ENCODE measurements at regions of chr6 and their contacts with region 1.

Region 1: DNA sequence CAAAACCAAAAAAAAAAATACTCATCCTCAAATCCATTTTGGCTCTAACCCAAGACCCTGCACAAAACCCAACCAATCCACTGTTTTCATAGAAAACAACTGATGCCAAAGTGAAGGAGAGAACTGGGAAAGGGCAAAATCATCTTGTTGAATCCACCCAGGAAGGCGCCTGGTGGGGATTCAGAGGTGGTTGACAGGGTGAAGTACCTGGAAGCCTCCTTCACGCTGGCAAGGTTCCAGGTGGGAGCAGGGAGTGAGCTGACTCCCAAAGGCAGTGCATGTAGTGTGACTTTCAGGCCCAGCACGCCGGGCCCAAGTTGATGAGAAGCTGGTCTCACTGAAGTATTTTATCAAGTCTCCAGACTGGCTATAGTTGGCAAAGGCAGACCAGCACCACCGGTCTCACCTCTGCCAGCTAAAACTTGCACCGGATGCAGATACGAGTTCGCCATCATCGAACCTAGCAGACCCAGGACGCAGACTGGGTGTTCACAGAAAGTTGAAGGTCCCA is 16.5 kb downstream of the PPP1R10 start:
- DNase-seq: no peak
- H3K4me3 Mint-ChIP-seq: no peak overlapping the region
- H3K27ac Mint-ChIP-seq: peak overlapping the region; percentile 11
- H3K4me1 Mint-ChIP-seq: peaks cover 18% of the 10 kb centered on the region
- H3K27me3 Mint-ChIP-seq: no peaks in the 10 kb centered on the region

Region 2: DNA sequence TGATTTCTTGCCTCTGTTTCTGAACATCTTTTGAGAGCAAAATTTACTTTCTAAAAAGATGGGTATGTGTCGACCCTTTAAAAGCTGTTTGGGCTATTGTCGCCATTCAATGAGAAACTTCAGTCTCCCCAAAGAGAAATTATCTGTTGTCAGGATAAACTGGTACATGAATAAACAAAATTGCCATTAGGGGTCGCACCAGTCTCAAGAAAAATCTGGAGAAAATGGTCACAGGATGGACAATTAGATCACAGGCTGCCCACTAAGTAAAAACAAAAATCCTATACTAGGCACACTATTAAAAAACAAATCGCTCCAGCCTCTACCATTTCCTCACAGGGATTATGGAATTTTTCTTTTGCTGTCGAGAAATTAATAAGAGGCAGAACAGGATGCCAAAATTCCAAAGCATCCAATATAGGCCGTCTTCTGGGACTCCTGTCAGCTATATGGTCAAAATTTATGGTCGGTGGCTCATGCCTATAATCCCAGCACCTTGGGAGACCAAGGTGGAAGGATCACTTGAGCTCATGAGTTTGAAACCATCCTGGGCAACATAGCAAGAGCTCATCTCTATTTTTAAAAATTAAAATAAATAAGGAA is 116.7 kb before region 1 on chr6:
- CTCF ChIA-PET with region 1: interaction called, 17 read pairs
- POLR2A ChIA-PET with region 1: interaction called, 11 read pairs
- DNase-seq: peak; percentile 62
- H3K4me3 Mint-ChIP-seq: no peak overlapping the region
- H3K27ac Mint-ChIP-seq: no peak overlapping the region
- H3K4me1 Mint-ChIP-seq: peaks cover 33% of the 10 kb centered on the region
- H3K27me3 Mint-ChIP-seq: peaks cover 43% of the 10 kb centered on the region

Region 3: GRCh38 chr6:30583921-30584320 is 16.6 kb before region 1 on chr6:
- CTCF ChIA-PET with region 1: interaction called, 21 read pairs
- POLR2A ChIA-PET with region 1: interaction called, 7 read pairs
- DNase-seq: no peak
- H3K4me3 Mint-ChIP-seq: no peak overlapping the region
- H3K27ac Mint-ChIP-seq: no peak overlapping the region
- H3K4me1 Mint-ChIP-seq: no peaks in the 10 kb centered on the region
- H3K27me3 Mint-ChIP-seq: no peaks in the 10 kb centered on the region

Region 4: DNA sequence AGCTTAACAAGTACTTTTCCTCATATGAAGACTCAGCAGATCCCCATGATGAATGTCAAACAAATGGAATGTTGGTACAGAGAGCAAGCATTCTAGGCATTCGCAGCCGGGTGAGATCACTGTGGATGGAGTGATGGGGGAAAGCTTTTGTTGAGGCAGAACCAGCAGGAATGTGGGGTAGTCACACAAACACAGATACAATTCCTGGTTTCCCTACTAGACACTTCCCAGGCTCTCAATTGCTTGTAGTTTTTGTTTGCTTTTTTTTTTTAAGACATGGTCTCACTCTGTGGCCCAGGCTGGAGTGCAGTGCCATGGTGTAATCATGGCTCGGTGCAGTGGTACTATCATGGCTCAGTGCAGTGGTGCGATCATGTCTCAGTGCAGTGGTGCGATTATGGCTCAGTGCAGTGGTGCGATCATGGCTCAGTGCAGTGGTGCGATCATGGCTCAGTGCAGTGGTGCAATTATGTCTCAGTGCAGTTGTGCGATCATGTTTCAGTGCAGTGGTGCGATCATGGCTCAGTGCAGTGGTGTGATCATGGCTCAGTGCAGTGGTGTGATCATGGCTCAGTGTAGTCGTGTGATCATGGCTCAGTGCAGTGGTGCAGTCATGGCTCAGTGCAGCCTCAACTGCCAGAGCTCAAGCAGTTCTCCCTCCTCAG is 159.2 kb after region 1 on chr6:
- CTCF ChIA-PET with region 1: no interaction called
- POLR2A ChIA-PET with region 1: no interaction called
- DNase-seq: no peak
- H3K4me3 Mint-ChIP-seq: no peak overlapping the region
- H3K27ac Mint-ChIP-seq: no peak overlapping the region
- H3K4me1 Mint-ChIP-seq: peaks cover 32% of the 10 kb centered on the region
- H3K27me3 Mint-ChIP-seq: no peaks in the 10 kb centered on the region

Region 5: GRCh38 chr6:31513456-31514165 is 913.1 kb after region 1 on chr6:
- CTCF ChIA-PET with region 1: no interaction called
- POLR2A ChIA-PET with region 1: no interaction called
- DNase-seq: no peak
- H3K4me3 Mint-ChIP-seq: no peak overlapping the region
- H3K27ac Mint-ChIP-seq: no peak overlapping the region
- H3K4me1 Mint-ChIP-seq: peaks cover 4% of the 10 kb centered on the region
- H3K27me3 Mint-ChIP-seq: peaks cover 7% of the 10 kb centered on the region

Measured in activated CD4-positive, alpha-beta T cell treated with anti-CD3 and anti-CD28 coated beads, Interleukin-2, amount 10 ng/mL, durations not matched to agents 7 days and 5 days (primary cell).